ENCODE measurements at regions of chr22 and their contacts with region 1.

Region 1: DNA sequence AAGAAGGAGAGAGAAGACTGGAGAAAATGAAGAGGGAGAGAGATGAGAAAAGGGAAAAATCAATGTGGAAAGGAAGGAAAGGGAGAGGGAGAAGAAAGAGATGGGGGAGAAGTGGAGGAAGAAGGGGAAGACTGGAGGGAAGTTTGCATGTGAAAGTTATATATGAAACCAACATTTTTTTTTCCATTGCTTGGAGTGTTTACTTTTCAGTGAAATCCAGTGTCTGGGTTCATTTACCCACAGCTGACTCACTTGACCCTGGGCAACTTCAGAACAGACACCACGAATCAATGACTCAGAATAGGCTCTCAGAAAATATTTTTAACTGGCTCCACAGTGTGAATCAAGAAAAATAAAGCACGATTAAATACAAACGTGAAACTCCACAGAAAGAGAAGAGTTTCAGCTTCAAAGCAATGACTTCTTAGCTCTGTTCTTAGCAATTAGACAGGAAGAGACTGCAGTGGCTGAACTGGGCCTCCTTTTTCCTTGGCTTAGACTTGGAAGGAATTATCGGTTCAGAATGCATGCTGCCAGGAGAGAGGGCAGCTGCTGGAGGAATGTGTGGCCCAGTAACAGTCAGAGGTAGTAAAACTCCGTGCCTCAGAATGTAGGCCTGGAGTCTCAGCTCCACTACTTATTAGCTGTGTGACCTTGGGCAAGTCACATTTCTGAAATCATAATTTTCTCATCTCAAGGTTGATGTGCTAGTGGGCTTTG is 237.5 kb downstream of the MIAT start:
- DNase-seq: peak; percentile 84
- H3K4me3 ChIP-seq: no peak overlapping the region
- CTCF ChIP-seq: no peak

Region 2: GRCh38 chr22:26679003-26679629 is 215.8 kb before region 1 on chr22:
- in situ Hi-C with region 1: loop called (anchors 25 kb)
- DNase-seq: peak; percentile 55
- H3K4me3 ChIP-seq: no peak overlapping the region
- CTCF ChIP-seq: peak; percentile 98

Measured in astrocyte of the cerebellum (primary cell).